Caco-2 (cell line): ENCODE measurements at regions of chr19 and their contacts with region 1.

Region 1: GRCh38 chr19:11597202-11598102 is at the start of gene ZNF627:
- DNase-seq: peak; percentile 98
- H3K4me3 ChIP-seq: peak within 1 kb of the TSS; percentile 54
- H3K4me3 Mint-ChIP-seq: peak within 1 kb of the TSS; percentile 90
- H3K27ac Mint-ChIP-seq: peak within 1 kb of the TSS; percentile 94
- H3K4me1 ChIP-seq: 0 out of 2 replicates have a peak, but pooled peaks cover 3% of the 10 kb centered on the region
- H3K4me1 Mint-ChIP-seq: peaks cover 5% of the 10 kb centered on the region
- H3K27me3 ChIP-seq: no peaks in the 10 kb centered on the region
- H3K27me3 Mint-ChIP-seq: no peaks in the 10 kb centered on the region
- CTCF ChIP-seq: no peak
- total RNA-seq, gene ZNF627: 8.1 and 9.0 TPM in 2 replicates

Region 2: DNA sequence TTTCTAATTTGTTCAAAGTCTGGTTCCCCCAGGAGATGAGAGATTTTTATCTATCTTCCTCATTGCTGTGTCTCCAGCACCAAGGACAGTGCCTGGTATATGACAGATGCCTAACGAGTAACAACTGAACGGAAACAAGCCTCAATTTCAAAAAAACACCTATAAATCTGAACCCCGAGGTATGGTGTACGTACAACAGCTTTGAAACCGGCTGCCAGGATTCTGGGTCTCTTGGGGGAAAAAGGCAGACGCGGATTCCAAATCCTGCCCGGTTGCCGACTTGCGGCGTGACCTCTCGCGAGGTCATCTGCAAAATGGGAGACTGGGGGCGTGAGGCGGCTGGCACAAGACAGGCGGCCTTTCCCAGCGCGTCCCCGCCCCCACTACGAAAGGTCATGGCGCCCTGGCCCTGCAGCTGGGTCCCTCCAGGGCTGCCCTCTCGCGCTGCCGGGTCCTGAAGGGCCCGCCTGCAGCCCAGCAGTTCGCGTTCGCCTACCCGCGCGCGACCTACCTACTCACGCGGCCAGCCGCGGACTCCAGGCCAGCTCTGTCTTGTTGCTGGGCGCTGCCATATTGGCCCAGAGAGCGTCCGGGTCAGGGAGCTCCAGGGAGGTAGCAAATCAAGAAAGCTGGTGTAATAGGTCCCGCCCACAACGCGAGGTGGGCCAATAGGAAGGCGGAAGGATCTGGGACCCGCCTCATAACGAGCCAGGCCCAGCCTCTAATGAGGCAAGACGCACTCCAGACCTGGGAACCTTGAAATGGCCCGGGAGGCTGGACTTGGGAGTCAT is 68.7 kb before region 1 on chr19 and contains the start of gene ECSIT:
- CTCF ChIA-PET with region 1: no interaction called
- POLR2A ChIA-PET with region 1: interaction called, 5 read pairs
- intact Hi-C with region 1: loop called (anchors 2 kb)
- DNase-seq: peak; percentile 96 to 98
- H3K4me3 ChIP-seq: peak within 1 kb of the TSS; percentile 46
- H3K4me3 Mint-ChIP-seq: peak within 1 kb of the TSS; percentile 99
- H3K27ac Mint-ChIP-seq: peak within 1 kb of the TSS; percentile 97
- H3K4me1 ChIP-seq: peaks cover 6% of the 10 kb centered on the region; the same call in 1 of the 2 replicates
- H3K4me1 Mint-ChIP-seq: peaks cover 6% of the 10 kb centered on the region
- H3K27me3 ChIP-seq: no peaks in the 10 kb centered on the region
- H3K27me3 Mint-ChIP-seq: no peaks in the 10 kb centered on the region
- CTCF ChIP-seq: no peak
- total RNA-seq, gene ECSIT: 39.8 and 44.8 TPM in 2 replicates

Region 3: DNA sequence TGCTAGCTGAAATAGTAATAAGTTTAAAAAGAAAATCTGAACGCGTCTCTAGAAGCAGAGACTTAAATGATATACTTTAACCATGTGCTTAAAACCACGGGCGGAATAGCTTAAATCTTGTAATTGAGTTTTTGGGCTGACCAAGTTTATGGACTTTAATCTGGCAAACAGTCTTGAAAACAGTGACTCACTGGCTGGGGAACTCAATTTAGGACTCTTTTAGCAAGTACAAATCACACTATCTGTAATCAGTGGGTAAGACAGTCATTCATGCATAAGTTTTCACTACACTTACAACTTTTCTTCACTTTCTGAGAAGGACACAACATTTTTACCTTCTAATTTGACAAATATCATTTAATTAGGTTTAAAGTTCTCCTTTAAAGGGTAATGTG is 26.6 kb after region 1 on chr19:
- CTCF ChIA-PET with region 1: no interaction called
- POLR2A ChIA-PET with region 1: no interaction called
- intact Hi-C with region 1: loop called (anchors 2 kb)
- DNase-seq: no peak
- H3K4me3 ChIP-seq: peak overlapping the region; percentile 40
- H3K4me3 Mint-ChIP-seq: peak overlapping the region; percentile 61
- H3K27ac Mint-ChIP-seq: no peak overlapping the region
- H3K4me1 ChIP-seq: peaks cover 8% of the 10 kb centered on the region
- H3K4me1 Mint-ChIP-seq: no peaks in the 10 kb centered on the region
- H3K27me3 ChIP-seq: no peaks in the 10 kb centered on the region
- H3K27me3 Mint-ChIP-seq: no peaks in the 10 kb centered on the region
- CTCF ChIP-seq: no peak

Region 4: GRCh38 chr19:11639602-11640471 is 42.4 kb after region 1 on chr19:
- CTCF ChIA-PET with region 1: no interaction called
- POLR2A ChIA-PET with region 1: no interaction called
- intact Hi-C with region 1: loop called (anchors 1 kb)
- DNase-seq: peak; percentile 97 to 98
- H3K4me3 ChIP-seq: peak overlapping the region; percentile 83
- H3K4me3 Mint-ChIP-seq: peak overlapping the region; percentile 81
- H3K27ac Mint-ChIP-seq: peak overlapping the region; percentile 57
- H3K4me1 ChIP-seq: peaks cover 3% of the 10 kb centered on the region; the same call in 1 of the 2 replicates
- H3K4me1 Mint-ChIP-seq: no peaks in the 10 kb centered on the region
- H3K27me3 ChIP-seq: no peaks in the 10 kb centered on the region
- H3K27me3 Mint-ChIP-seq: no peaks in the 10 kb centered on the region
- CTCF ChIP-seq: no peak

Region 5: GRCh38 chr19:11649941-11650340 is 52.5 kb after region 1 on chr19:
- CTCF ChIA-PET with region 1: no interaction called
- POLR2A ChIA-PET with region 1: no interaction called
- intact Hi-C with region 1: no loop called
- DNase-seq: no peak
- H3K4me3 ChIP-seq: no peak overlapping the region
- H3K4me3 Mint-ChIP-seq: no peak overlapping the region
- H3K27ac Mint-ChIP-seq: no peak overlapping the region
- H3K4me1 ChIP-seq: no peaks in the 10 kb centered on the region
- H3K4me1 Mint-ChIP-seq: no peaks in the 10 kb centered on the region
- H3K27me3 ChIP-seq: no peaks in the 10 kb centered on the region
- H3K27me3 Mint-ChIP-seq: no peaks in the 10 kb centered on the region
- CTCF ChIP-seq: no peak